ENCODE measurements at regions of chr7 and their contacts with region 1.

Region 1: GRCh38 chr7:149799397-149800171 is 26.2 kb upstream of the ZNF467 start:
- DNase-seq: peak; percentile 80
- ATAC-seq: peak; percentile 66
- H3K4me3 Mint-ChIP-seq: no peak overlapping the region
- H3K27ac Mint-ChIP-seq: no peak overlapping the region
- H3K4me1 Mint-ChIP-seq: no peaks in the 10 kb centered on the region
- H3K27me3 Mint-ChIP-seq: no peaks in the 10 kb centered on the region

Region 2: DNA sequence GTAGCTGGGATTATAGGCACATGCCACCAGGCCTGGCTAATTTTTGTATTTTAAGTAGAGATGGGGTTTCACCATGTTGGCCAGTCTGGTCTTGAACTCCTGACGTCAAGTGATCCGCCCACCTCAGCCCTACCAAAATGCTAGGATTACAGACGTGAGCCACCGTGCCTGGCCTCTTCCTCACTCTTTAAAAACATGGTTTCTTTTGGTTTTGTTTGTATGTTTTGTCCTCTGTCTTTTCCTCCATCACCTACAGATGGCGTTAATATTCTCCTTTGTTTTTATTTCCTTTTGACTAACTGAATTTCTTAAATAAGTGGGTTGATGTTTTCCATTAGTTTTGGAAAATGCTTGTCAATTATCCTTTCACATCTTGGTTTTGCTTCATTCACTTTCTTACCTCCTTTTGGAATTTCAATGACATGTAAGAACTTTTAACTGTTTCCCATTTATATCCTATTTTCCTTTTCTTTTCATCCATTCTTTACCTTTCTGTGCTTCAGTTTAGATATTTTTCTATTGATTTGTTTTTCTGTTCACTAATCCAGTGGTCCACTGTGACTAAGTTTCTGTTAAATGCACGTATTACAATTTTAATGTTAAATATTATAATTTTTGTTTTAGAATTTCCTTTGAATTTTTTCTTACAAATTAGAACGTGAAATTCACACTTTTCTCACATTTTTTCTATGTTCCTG is 130.3 kb before region 1 on chr7:
- CTCF ChIA-PET with region 1: interaction called, 7 read pairs
- POLR2A ChIA-PET with region 1: no interaction called
- intact Hi-C with region 1: loop called in 1 of 2 experiments (anchors 10 kb)
- DNase-seq: peak; percentile 36
- ATAC-seq: no peak
- H3K4me3 Mint-ChIP-seq: no peak overlapping the region
- H3K27ac Mint-ChIP-seq: no peak overlapping the region
- H3K4me1 Mint-ChIP-seq: peaks cover 2% of the 10 kb centered on the region
- H3K27me3 Mint-ChIP-seq: peaks cover 35% of the 10 kb centered on the region

Region 3: GRCh38 chr7:150003304-150003810 is 203.8 kb after region 1 on chr7:
- CTCF ChIA-PET with region 1: no interaction called
- POLR2A ChIA-PET with region 1: no interaction called
- intact Hi-C with region 1: no loop called
- DNase-seq: no peak
- ATAC-seq: no peak
- H3K4me3 Mint-ChIP-seq: no peak overlapping the region
- H3K27ac Mint-ChIP-seq: no peak overlapping the region
- H3K4me1 Mint-ChIP-seq: no peaks in the 10 kb centered on the region
- H3K27me3 Mint-ChIP-seq: no peaks in the 10 kb centered on the region

Measured in activated CD4-positive, alpha-beta T cell treated with anti-CD3 and anti-CD28 coated beads for 36 hours (primary cell).